Naive thymus-derived CD4-positive, alpha-beta T cell (primary cell): ENCODE measurements at regions of chr1 and their contacts with region 1.

Region 1: DNA sequence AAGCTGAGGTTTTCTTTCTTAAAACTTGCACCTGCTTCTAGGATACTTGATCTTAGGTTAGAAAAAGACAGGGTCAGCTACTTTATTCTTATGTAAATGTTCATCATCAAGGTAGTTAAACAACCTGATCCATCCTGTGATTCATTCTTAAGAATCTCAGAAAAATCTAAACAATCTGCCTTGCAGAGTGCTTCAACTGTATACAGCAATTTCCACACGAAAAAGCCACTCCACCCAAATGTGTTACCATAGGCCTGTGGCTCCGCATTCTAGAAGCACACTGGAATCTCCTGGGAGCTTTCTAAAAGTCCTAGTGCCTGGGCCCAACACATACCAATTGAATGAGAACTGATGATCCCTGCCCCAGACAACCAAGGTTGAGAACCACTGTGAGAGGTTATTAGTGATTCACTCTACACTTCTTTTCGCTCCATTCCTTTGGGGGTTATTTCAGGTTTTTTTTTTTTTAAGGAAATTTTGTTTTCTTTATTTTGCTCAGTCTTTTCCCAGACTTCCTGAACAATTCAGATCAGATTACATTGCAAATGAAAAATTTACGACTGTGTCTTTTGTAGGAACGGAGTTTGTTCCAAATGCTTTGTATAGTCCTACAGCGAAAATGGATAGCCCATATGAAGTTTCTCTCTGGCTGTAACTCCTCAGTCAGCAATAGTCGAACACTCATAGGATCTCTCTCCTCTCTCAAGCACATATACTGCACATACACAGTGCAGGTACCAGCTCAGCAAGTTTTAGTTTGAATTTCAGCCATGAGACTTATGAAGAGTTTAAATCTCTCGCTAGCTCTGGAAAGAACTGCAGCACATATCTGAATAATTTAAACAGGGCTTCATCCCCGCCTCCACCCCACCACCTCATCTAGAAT is 16.1 kb downstream of the SMYD2 start:
- DNase-seq: no peak
- ATAC-seq: no peak
- H3K4me3 ChIP-seq: no peak overlapping the region
- H3K4me3 Mint-ChIP-seq: no peak overlapping the region
- H3K27ac ChIP-seq: no peak overlapping the region
- H3K27ac Mint-ChIP-seq: peak overlapping the region in 1 of 9 donors; percentile 33
- H3K4me1 ChIP-seq: peaks cover 0 to 5% of the 10 kb centered on the region in 2 donors
- H3K4me1 Mint-ChIP-seq: peaks cover 7 to 56% (median 31%) of the 10 kb centered on the region in 7 donors
- H3K27me3 ChIP-seq: no peaks in the 10 kb centered on the region
- H3K27me3 Mint-ChIP-seq: no peaks in the 10 kb centered on the region

Region 2: GRCh38 chr1:214310010-214310409 is 12.9 kb after region 1 on chr1:
- CTCF ChIA-PET with region 1: no interaction called
- POLR2A ChIA-PET with region 1: no interaction called
- intact Hi-C with region 1: loop called in 1 of 2 experiments (anchors 2 kb)
- DNase-seq: no peak
- ATAC-seq: no peak
- H3K4me3 ChIP-seq: no peak overlapping the region
- H3K4me3 Mint-ChIP-seq: peak overlapping the region in 9 of 10 donors; percentile 7 to 78 (median 57)
- H3K27ac ChIP-seq: no peak overlapping the region
- H3K27ac Mint-ChIP-seq: peak overlapping the region in 2 of 9 donors; percentile 22 to 49
- H3K4me1 ChIP-seq: peaks cover 17% of the 10 kb centered on the region in 2 donors
- H3K4me1 Mint-ChIP-seq: peaks cover 21 to 48% (median 43%) of the 10 kb centered on the region in 7 donors
- H3K27me3 ChIP-seq: no peaks in the 10 kb centered on the region
- H3K27me3 Mint-ChIP-seq: no peaks in the 10 kb centered on the region

Region 3: GRCh38 chr1:214510914-214511638 is 214.0 kb after region 1 on chr1:
- CTCF ChIA-PET with region 1: interaction called, 10 read pairs
- POLR2A ChIA-PET with region 1: no interaction called
- intact Hi-C with region 1: no loop called
- DNase-seq: no peak
- ATAC-seq: no peak
- H3K4me3 ChIP-seq: no peak overlapping the region
- H3K4me3 Mint-ChIP-seq: no peak overlapping the region
- H3K27ac ChIP-seq: no peak overlapping the region
- H3K27ac Mint-ChIP-seq: peak overlapping the region in 1 of 9 donors; percentile 9
- H3K4me1 ChIP-seq: peaks cover 0 to 4% of the 10 kb centered on the region in 2 donors
- H3K4me1 Mint-ChIP-seq: peaks cover 0 to 19% (median 18%) of the 10 kb centered on the region in 7 donors
- H3K27me3 ChIP-seq: no peaks in the 10 kb centered on the region
- H3K27me3 Mint-ChIP-seq: peaks cover 0 to 10% (median 4%) of the 10 kb centered on the region in 5 donors